ENCODE measurements at regions of chr1 and their contacts with region 1.

Region 1: DNA sequence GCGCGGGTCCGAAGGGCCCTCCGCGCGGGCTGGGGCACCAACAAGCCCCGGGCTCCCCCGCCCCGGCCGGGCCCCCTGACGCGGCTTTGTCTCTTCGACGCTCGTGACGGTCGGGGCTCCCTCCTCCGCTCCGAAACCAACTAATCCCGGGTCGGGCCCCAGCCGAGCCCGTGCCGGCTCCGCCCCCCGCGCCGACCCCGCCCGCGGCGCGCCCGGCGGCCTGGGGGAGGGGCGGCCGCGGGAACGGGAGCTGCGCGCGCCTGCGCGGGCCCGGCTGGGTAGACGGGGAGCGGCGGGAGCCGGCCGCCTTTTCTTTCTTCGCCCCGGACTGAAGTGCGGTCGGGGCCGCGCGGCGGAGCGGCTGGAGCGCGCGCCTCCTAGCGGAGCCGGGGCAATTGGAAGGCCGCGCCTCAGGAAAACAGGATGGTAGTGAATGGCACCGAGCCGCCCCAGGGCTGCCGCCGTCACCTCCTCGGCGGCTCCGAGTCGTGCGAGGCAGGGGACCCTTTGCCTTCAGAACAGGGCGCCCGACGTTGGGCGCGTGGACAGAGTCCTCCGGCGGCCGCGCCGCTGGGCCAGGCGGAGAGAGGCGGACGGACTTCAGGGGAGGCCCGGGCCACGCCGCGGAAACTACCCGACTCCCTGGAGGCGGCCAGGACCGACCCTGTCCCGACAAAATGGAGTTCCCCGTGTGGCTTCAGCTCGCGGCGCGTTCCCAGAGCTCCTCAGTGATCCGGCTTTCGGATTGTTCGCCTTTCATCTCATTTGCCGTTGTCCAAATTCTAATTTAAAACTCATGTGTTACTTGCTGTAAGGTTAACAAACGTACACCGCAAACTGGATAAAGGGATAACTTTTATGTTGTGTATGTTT is at the start of gene TP53BP2:
- DNase-seq: peak; percentile 97
- H3K4me3 ChIP-seq: peak within 1 kb of the TSS; percentile 81 to 94
- H3K27ac ChIP-seq: peak within 1 kb of the TSS; percentile 96 to 98
- H3K4me1 ChIP-seq: peaks cover 13 to 16% of the 10 kb centered on the region in 2 experiments; a peak in 3 of 4 replicates
- H3K27me3 ChIP-seq: no peaks in the 10 kb centered on the region
- CTCF ChIP-seq: peak; percentile 70
- EP300 ChIP-seq: no peak; a peak in 1 of 4 replicates
- RAD21 ChIP-seq: peak; percentile 40
- polyA plus RNA-seq, gene TP53BP2: 11.4 and 14.8 TPM in 2 replicates

Region 2: DNA sequence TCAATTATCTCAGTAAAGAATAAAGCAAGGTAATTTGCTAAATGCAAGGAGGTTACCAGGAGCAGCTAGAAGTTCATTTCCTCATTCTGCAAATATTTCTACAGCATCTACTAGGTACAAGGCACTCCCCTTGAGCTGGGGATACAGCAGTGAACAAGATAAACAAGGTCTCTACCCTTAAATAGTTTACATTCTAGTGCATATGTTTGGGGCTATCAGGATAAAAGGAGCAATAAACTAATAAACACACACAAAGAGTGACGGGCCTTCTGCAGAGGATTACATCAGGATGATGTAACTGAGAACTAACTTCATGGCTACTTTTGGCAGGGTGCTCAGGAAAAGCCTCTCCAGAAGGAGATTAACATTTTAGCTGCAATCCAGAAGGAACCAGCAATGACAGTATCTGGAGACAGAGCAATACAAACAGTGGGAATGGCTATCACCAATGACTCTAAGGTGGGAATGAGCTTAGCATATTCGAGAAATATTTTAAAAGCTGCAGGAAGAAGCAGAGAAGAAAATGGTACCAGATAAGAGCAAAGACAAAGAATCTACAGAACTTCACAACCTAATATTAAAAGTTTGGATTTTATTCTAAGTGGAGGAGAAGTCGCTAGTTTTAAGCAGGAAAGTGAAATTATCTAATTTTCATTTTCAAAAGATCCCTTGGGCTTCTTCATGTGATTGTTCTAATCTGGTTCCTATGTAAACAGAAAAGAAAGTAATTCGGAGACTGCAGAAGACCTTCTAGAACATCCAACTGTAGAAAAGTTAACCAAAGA is 26.1 kb before region 1 on chr1:
- CTCF ChIA-PET with region 1: interaction called, 13 read pairs
- POLR2A ChIA-PET with region 1: interaction called, 7 read pairs
- DNase-seq: no peak
- H3K4me3 ChIP-seq: no peak overlapping the region
- H3K27ac ChIP-seq: peak overlapping the region in 1 of 2 experiments; percentile 6; a peak in 1 of 4 replicates
- H3K4me1 ChIP-seq: peaks cover 0 to 15% of the 10 kb centered on the region in 2 experiments; a peak in 1 of 4 replicates
- H3K27me3 ChIP-seq: no peaks in the 10 kb centered on the region
- CTCF ChIP-seq: no peak
- EP300 ChIP-seq: no peak
- RAD21 ChIP-seq: no peak

Region 3: GRCh38 chr1:223825767-223826748 is 20.0 kb before region 1 on chr1:
- CTCF ChIA-PET with region 1: interaction called, 13 read pairs
- POLR2A ChIA-PET with region 1: interaction called, 7 read pairs
- DNase-seq: no peak
- H3K4me3 ChIP-seq: no peak overlapping the region
- H3K27ac ChIP-seq: no peak overlapping the region
- H3K4me1 ChIP-seq: peaks cover 5 to 15% of the 10 kb centered on the region in 2 experiments; a peak in 3 of 4 replicates
- H3K27me3 ChIP-seq: no peaks in the 10 kb centered on the region
- CTCF ChIP-seq: no peak
- EP300 ChIP-seq: no peak
- RAD21 ChIP-seq: no peak

Region 4: GRCh38 chr1:223834660-223835263 is 11.3 kb before region 1 on chr1:
- CTCF ChIA-PET with region 1: interaction called, 17 read pairs
- POLR2A ChIA-PET with region 1: interaction called, 8 read pairs
- DNase-seq: no peak
- H3K4me3 ChIP-seq: no peak overlapping the region
- H3K27ac ChIP-seq: peak overlapping the region in 1 of 2 experiments; percentile 98; a peak in 2 of 4 replicates
- H3K4me1 ChIP-seq: peaks cover 23 to 51% of the 10 kb centered on the region in 2 experiments
- H3K27me3 ChIP-seq: no peaks in the 10 kb centered on the region
- CTCF ChIP-seq: no peak
- EP300 ChIP-seq: no peak
- RAD21 ChIP-seq: no peak